ENCODE measurements at regions of chr9 and their contacts with region 1.

Region 1: DNA sequence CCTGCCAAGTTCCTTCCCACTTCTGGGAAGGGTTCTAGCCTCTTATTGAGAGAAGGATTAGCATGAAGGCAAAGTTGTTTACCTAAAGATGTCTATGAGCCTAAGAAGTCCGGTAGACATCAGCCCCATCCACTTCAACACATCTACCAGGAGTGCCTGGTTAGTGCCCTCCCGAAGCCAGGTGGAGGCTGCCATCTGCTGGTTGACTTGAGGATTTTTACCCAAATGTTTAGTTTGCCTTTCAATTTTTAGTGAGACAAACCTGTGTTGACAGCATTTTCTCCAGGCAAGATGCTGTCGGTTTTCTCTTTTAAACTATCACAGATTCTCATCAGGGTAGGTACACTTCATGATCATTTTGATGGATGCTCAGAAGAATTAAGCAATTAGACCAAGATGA is 83.6 kb upstream of the TNFSF8 start:
- DNase-seq: peak; percentile 55 to 68
- ATAC-seq: peak in 7 of 8 donors; percentile 58 to 84 (median 80)
- H3K4me3 ChIP-seq: no peak overlapping the region
- H3K27ac ChIP-seq: no peak overlapping the region
- H3K4me1 ChIP-seq: peaks cover 0 to 15% (median 0%) of the 10 kb centered on the region in 9 donors
- H3K27me3 ChIP-seq: peaks cover 0 to 34% (median 15%) of the 10 kb centered on the region in 7 donors
- CTCF ChIP-seq: peak; percentile 60 to 84 (median 79)

Region 2: GRCh38 chr9:114405294-114406034 is 608.5 kb before region 1 on chr9:
- intact Hi-C with region 1: loop called (anchors 1 to 10 kb)
- DNase-seq: peak; percentile 52 to 84
- ATAC-seq: peak; percentile 87 to 95 (median 91)
- H3K4me3 ChIP-seq: no peak overlapping the region
- H3K27ac ChIP-seq: no peak overlapping the region
- H3K4me1 ChIP-seq: peaks cover 0 to 6% (median 0%) of the 10 kb centered on the region in 9 donors
- H3K27me3 ChIP-seq: peaks cover 0 to 3% (median 0%) of the 10 kb centered on the region in 7 donors
- CTCF ChIP-seq: peak; percentile 47 to 93 (median 85)

Region 3: GRCh38 chr9:114434878-114435311 is 579.1 kb before region 1 on chr9:
- intact Hi-C with region 1: loop called in 1 of 10 experiments (anchors 10 kb)
- DNase-seq: no peak
- ATAC-seq: peak in 3 of 8 donors; percentile 31 to 41 (median 39)
- H3K4me3 ChIP-seq: no peak overlapping the region
- H3K27ac ChIP-seq: no peak overlapping the region
- H3K4me1 ChIP-seq: no peaks in the 10 kb centered on the region
- H3K27me3 ChIP-seq: peaks cover 0 to 41% (median 8%) of the 10 kb centered on the region in 7 donors
- CTCF ChIP-seq: peak in 7 of 9 donors; percentile 36 to 59 (median 46)

Region 4: GRCh38 chr9:114662081-114662989 is 351.7 kb before region 1 on chr9:
- intact Hi-C with region 1: loop called in 8 of 10 experiments (anchors 2 to 10 kb)
- DNase-seq: peak in 1 of 2 donors; percentile 31
- ATAC-seq: peak in 7 of 8 donors; percentile 67 to 81 (median 75)
- H3K4me3 ChIP-seq: no peak overlapping the region
- H3K27ac ChIP-seq: no peak overlapping the region
- H3K4me1 ChIP-seq: no peaks in the 10 kb centered on the region
- H3K27me3 ChIP-seq: peaks cover 0 to 40% (median 23%) of the 10 kb centered on the region in 7 donors
- CTCF ChIP-seq: peak; percentile 58 to 88 (median 73)

Region 5: GRCh38 chr9:114681594-114682332 is 332.2 kb before region 1 on chr9 and contains the start of gene TEX48:
- intact Hi-C with region 1: loop called in 4 of 10 experiments (anchors 2 to 5 kb)
- DNase-seq: peak in 1 of 2 donors; percentile 39
- ATAC-seq: peak in 5 of 8 donors; percentile 46 to 71 (median 53)
- H3K4me3 ChIP-seq: no peak within 1 kb of the TSS
- H3K27ac ChIP-seq: no peak within 1 kb of the TSS
- H3K4me1 ChIP-seq: peaks cover 0 to 7% (median 0%) of the 10 kb centered on the region in 9 donors
- H3K27me3 ChIP-seq: peaks cover 0 to 36% (median 15%) of the 10 kb centered on the region in 7 donors
- CTCF ChIP-seq: peak; percentile 23 to 65 (median 51)
- total RNA-seq, gene TEX48: not detected

Region 6: GRCh38 chr9:114738581-114739316 is 275.2 kb before region 1 on chr9:
- intact Hi-C with region 1: loop called in 9 of 10 experiments (anchors 1 to 5 kb)
- DNase-seq: peak; percentile 21 to 69
- ATAC-seq: peak in 7 of 8 donors; percentile 79 to 96 (median 85)
- H3K4me3 ChIP-seq: no peak overlapping the region
- H3K27ac ChIP-seq: no peak overlapping the region
- H3K4me1 ChIP-seq: peaks cover 0 to 13% (median 0%) of the 10 kb centered on the region in 9 donors
- H3K27me3 ChIP-seq: peaks cover 0 to 13% (median 3%) of the 10 kb centered on the region in 7 donors
- CTCF ChIP-seq: peak; percentile 49 to 86 (median 76)

Region 7: DNA sequence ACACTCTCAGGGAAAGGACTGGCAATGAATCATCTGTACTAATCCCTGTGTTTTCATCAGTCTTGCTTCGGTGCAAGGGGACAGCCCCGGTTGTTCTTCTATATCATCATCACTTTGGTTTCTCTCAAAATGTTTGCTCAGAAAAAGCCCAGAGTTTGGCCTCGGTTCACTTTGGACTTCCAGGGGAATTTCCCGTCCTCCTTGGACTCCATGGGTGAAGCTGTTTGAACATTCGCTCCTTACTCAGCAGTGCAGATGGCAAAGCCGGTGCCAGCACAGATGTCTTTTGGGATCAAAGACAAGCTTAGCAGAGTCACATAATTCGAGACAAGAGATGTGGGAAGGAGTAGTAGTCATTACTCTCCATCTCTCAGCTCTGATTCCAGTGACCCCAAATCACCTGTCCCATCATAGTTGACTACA is 13.8 kb before region 1 on chr9:
- intact Hi-C with region 1: no loop called
- DNase-seq: no peak
- ATAC-seq: no peak
- H3K4me3 ChIP-seq: no peak overlapping the region
- H3K27ac ChIP-seq: no peak overlapping the region
- H3K4me1 ChIP-seq: peaks cover 0 to 11% (median 0%) of the 10 kb centered on the region in 9 donors
- H3K27me3 ChIP-seq: peaks cover 0 to 65% (median 36%) of the 10 kb centered on the region in 7 donors
- CTCF ChIP-seq: no peak

Measured in heart right ventricle (tissue), 16 donors.